GM10248 (cell line): ENCODE measurements at regions of chr4 and their contacts with region 1.

Region 1: GRCh38 chr4:56799824-56800756 is 21.4 kb downstream of the SPINK2 start:
- DNase-seq: peak; percentile 78
- CTCF ChIP-seq: peak; percentile 89

Region 2: GRCh38 chr4:56575820-56576429 is 224.2 kb before region 1 on chr4:
- CTCF ChIA-PET with region 1: interaction called, 11 read pairs
- POLR2A ChIA-PET with region 1: no interaction called
- DNase-seq: peak; percentile 12
- CTCF ChIP-seq: peak; percentile 24

Region 3: GRCh38 chr4:56739066-56739777 is 60.9 kb before region 1 on chr4:
- CTCF ChIA-PET with region 1: no interaction called
- POLR2A ChIA-PET with region 1: no interaction called
- DNase-seq: no peak
- CTCF ChIP-seq: no peak

Region 4: DNA sequence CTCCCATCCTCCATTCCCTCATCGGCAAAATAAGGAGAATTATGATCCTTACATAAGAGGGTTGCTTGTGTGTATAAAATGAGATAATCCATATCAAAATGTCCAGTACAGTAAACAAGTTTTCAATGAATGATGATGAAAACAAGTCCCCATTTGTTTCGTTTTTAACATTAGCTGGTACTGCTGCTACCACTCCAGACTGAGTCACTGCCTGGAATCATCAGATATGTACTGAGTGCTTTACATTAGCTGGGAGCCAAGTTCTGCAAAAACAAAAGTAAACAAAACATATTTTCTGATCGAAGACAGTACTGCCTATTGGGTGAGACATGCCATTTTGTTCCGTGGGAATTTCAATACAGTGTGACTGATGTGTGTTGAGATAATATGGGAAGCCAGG is 433.3 kb after region 1 on chr4:
- CTCF ChIA-PET with region 1: no interaction called
- POLR2A ChIA-PET with region 1: no interaction called
- DNase-seq: no peak
- CTCF ChIP-seq: no peak